MCF 10A (cell line): ENCODE measurements at regions of chr20 and their contacts with region 1.

Region 1: DNA sequence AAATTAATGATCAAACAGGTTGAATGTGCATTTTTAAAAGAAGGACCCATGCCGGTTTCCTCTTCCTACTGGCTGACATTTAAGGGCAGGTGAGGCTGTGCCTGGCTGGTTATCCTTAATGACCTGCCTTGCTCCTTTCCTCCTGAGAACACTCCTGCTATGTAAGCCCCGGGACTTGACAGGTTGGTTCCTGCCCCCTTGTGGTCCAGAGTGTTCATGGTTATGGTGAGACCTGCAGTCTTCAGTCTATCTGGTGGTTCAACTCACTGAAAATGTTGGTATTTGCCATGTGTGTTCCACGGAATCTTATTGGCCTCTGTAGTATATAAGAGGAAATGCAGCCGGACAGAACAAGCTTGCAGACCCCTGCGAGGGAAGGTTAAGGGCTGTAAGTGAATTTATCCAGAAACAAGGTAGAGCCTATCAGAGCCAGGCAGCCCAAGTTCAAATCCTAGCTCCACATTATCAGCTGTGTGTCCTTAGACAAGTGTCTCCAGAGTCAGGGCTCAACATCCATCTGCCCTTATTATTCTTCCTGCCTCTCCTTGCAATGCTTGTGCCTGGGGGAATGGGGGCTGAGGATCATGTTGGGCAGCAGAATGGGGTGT is 5.2 kb upstream of the BPIFA3 start:
- DNase-seq: peak; percentile 61
- H3K4me3 Mint-ChIP-seq: no peak overlapping the region
- H3K27ac Mint-ChIP-seq: no peak overlapping the region
- H3K4me1 Mint-ChIP-seq: no peaks in the 10 kb centered on the region
- H3K27me3 Mint-ChIP-seq: peaks cover 69% of the 10 kb centered on the region
- CTCF ChIP-seq: peak; percentile 20

Region 2: GRCh38 chr20:33097001-33097400 is 114.9 kb before region 1 on chr20:
- CTCF ChIA-PET with region 1: no interaction called
- POLR2A ChIA-PET with region 1: no interaction called
- intact Hi-C with region 1: loop called (anchors 2 kb)
- DNase-seq: no peak
- H3K4me3 Mint-ChIP-seq: no peak overlapping the region
- H3K27ac Mint-ChIP-seq: no peak overlapping the region
- H3K4me1 Mint-ChIP-seq: no peaks in the 10 kb centered on the region
- H3K27me3 Mint-ChIP-seq: peaks cover 20% of the 10 kb centered on the region
- CTCF ChIP-seq: no peak